ENCODE measurements at regions of chr18 and their contacts with region 1.

Region 1: DNA sequence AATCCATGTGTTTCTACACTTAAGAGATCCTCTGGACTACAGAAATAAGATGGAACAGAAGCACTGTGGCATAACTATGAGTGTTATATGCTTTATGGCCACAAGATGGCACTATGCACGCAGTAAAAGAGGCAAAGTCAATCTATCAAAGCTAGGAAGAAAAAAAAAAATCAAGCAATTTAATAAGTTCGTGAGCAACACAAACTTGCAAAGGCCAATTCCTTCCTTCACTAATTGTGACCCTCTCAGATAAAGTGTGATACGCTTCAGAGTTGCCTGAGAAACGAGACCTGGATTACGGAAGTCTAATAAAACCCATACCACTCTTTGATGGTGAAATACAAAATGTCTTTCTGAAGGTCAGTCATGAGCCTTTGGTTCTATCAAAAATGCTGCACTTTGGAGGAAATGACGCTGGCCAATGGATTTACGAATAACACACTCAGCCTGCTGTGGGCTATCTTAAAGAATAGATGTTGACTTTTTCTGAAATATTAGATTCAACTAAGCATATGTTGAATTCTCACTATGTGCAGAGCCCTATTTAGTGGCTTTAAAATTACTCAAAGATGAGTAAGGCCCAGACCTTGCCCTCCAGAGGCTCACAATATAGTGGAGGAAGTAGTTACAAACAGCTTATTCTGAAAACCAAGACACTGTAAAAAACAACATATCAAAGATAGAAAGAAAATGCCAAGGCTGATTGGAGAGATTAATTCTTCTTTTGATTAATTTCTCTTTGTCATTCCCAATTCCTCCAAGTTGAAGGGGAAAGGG is 35.5 kb upstream of the TTR start:
- DNase-seq: peak in 2 of 10 donors; percentile 8 to 43

Region 2: DNA sequence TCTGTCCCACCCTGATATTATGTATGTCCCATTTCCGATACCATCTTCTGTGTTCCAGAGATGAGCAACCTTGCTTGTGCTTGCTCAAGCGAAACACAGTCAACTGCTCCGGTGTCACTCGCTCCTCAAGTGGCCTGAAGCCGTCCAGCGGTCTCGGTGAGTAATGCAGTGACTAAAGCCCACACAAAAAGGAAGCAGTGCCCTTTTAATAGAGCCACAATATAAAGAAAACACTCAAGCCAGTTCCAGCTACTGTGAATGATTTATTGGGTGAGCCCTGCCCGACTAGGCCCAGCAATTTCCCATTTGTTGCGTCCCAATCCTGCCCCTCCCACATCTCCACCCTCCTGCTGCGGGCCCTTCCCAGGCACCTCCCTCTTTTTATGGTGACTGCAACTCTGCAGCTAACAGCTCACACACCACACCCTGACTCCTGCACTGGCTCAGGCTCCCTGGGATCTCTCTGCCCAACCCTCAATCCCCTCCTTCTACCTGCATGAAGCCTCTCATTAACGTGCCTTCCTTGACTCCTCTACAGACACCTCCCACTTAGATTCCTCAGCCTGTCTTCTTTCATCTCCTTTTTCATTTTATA is 349.3 kb before region 1 on chr18:
- intact Hi-C with region 1: no loop called
- DNase-seq: no peak

Region 3: GRCh38 chr18:31722369-31722957 is 166.3 kb after region 1 on chr18:
- intact Hi-C with region 1: loop called (anchors 1 kb)
- DNase-seq: peak; percentile 51 to 96 (median 82)

Region 4: GRCh38 chr18:31819106-31819924 is 263.2 kb after region 1 on chr18:
- intact Hi-C with region 1: loop called (anchors 5 kb)
- DNase-seq: no peak

Region 5: GRCh38 chr18:31977270-31977872 is 421.2 kb after region 1 on chr18:
- intact Hi-C with region 1: loop called (anchors 10 kb)
- DNase-seq: peak in 3 of 10 donors; percentile 24 to 59 (median 31)

Measured in posterior cingulate gyrus (tissue), 11 donors.